Astrocyte of the cerebellum (primary cell): ENCODE measurements at regions of chr5 and their contacts with region 1.

Region 1: DNA sequence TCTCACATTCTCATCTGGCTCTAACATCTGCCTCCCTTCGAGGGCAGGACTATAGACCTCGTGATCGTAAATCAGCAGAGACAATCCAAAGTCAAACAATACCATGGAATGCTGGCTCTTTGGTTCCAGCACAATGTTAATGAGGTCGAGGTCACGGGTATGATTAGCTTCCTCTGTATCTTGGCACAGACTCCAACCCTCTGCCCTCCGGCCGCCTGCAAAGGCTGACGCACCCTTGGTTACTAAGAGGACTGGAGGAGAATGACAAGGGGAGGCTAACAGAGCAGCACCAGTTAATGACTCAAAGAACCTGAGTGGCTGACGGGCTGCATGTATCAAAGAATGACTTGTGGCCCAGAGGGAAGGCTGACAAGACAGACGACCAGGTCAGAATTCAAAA is 10.1 kb downstream of the LHFPL2 start:
- DNase-seq: peak; percentile 67
- H3K4me3 ChIP-seq: no peak overlapping the region
- CTCF ChIP-seq: no peak

Region 2: GRCh38 chr5:78544561-78545201 is 93.7 kb before region 1 on chr5:
- in situ Hi-C with region 1: loop called (anchors 5 kb)
- DNase-seq: peak; percentile 75
- H3K4me3 ChIP-seq: no peak overlapping the region
- CTCF ChIP-seq: no peak